BJ (cell line): ENCODE measurements at regions of chr3 and their contacts with region 1.

Region 1: DNA sequence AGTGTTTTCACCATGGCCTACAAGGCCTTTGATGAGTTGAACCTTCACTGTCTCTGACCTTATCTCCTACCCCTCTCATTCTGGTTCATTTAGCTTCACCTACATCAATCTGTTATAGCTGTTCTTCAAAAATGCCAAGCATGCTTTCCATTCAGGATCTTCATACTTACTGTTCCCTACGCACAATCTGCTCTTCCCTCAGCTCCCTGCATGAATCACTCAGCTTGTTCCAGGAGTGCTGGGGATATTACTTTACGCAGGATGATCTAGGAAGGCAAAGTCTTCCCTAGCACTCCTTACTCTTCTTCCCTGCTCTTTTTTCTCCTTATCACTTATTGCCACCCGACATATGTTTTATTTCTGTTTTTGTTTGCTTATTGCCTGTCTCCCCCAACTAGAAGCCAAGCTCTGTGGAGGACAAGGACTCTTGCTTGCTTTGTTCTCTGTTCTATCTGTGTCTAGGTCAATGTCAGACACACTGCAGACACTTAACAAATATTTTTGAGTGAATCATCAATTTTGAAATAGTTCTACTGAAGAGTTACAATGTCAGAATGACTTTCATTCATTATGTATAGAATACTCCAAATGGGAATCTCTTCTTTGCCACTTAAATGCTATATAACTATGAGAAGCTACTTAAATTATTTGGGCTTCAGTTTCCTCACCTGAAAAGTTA is 238.4 kb upstream of the FEZF2 start:
- DNase-seq: no peak
- H3K4me3 ChIP-seq: no peak overlapping the region
- H3K27me3 ChIP-seq: no peaks in the 10 kb centered on the region; the same call in 1 of the 2 replicates
- CTCF ChIP-seq: no peak

Region 2: DNA sequence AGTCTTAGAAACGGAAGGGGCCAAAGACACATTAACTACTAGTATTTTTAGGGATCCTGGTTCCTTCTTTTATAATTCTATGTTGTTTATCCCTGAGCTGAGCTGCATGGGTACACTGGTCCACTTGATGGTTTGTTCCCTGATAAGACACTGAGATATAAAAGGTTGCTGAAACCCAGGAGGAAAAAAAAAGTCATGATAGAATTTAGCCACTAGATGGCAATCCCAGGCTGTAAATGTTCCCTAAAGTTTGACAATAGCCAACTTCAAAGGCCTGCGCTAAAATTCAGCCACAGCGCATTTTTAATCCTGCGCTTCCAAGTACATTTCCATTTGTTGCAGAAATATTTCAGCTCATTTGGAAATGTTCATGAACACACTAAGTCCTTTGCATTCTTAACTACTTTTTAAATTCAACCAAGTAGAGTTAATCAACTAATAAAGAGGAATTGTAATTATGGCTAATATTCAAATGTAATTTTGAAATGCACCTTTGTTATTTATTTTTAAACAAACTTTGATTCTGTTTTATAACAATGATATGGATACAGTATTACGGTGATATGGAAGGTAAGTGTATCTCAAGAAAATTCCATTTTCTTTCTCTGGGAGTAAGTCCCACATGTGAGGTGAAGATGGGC is 11.0 kb after region 1 on chr3:
- CTCF ChIA-PET with region 1: interaction called, 22 read pairs
- POLR2A ChIA-PET with region 1: no interaction called
- DNase-seq: no peak
- H3K4me3 ChIP-seq: no peak overlapping the region
- H3K27me3 ChIP-seq: peaks cover 2% of the 10 kb centered on the region; the same call in 1 of the 2 replicates
- CTCF ChIP-seq: peak; percentile 65